Sigmoid colon (tissue), 7 donors: ENCODE measurements at regions of chr5 and their contacts with region 1.

Region 1: DNA sequence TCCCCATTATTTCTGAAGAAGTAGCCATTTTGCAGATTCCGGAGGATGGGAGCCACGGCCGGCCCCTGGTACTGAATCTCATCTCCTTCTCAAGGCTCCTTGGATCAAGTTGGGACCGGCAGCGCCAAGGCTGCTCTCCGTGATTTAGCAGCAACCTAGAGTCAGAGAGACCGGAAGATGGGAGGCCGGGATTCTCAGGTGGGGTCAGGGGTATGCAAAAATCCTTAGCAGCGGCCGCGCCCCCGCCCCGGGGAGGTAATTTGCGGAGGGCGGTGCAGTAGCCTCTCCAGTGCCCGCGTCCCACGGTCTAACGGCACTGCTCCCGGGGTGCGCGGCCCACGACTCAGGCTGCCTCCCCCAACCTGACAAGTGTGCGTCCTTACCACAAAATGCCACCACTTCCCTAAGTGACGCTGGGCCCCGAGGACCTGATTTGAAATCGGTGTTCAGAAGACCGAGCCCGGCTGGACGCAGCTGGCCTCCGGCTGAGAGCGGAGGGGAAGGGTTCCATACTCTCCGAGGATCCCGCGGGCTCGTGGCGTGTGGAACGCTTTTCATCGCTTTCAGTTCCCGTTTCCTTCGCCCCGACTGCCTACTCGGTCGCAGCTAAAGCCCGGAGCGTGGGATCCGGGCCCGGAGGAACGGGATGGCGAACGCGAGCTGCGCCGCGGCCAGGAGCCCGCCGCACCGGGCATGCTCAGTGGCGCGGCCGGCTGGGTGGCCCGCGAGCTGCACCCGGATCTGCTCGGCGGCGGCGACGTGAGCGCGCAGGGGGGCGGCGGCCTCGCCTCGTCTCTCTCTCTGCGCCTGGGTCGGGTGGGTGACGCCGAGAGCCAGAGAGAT is at the start of gene SCAMP1:
- DNase-seq: peak; percentile 95
- H3K4me3 ChIP-seq: peak within 1 kb of the TSS; percentile 83 to 97 (median 88)
- H3K27ac ChIP-seq: peak within 1 kb of the TSS; percentile 87 to 95 (median 92)
- H3K4me1 ChIP-seq: peaks cover 3 to 26% (median 12%) of the 10 kb centered on the region in 4 donors
- H3K27me3 ChIP-seq: no peaks in the 10 kb centered on the region
- CTCF ChIP-seq: peak in 2 of 4 experiments; percentile 12 to 52
- EP300 ChIP-seq: peak in 1 of 4 donors; percentile 24
- POLR2A ChIP-seq: no peak
- total RNA-seq, gene SCAMP1: 31.0 to 45.3 (median 37.7) TPM

Region 2: GRCh38 chr5:77499441-77499840 is 860.6 kb before region 1 on chr5:
- intact Hi-C with region 1: no loop called
- DNase-seq: no peak
- H3K4me3 ChIP-seq: no peak overlapping the region
- H3K27ac ChIP-seq: no peak overlapping the region
- H3K4me1 ChIP-seq: no peaks in the 10 kb centered on the region
- H3K27me3 ChIP-seq: no peaks in the 10 kb centered on the region
- CTCF ChIP-seq: no peak
- EP300 ChIP-seq: no peak
- POLR2A ChIP-seq: no peak

Region 3: DNA sequence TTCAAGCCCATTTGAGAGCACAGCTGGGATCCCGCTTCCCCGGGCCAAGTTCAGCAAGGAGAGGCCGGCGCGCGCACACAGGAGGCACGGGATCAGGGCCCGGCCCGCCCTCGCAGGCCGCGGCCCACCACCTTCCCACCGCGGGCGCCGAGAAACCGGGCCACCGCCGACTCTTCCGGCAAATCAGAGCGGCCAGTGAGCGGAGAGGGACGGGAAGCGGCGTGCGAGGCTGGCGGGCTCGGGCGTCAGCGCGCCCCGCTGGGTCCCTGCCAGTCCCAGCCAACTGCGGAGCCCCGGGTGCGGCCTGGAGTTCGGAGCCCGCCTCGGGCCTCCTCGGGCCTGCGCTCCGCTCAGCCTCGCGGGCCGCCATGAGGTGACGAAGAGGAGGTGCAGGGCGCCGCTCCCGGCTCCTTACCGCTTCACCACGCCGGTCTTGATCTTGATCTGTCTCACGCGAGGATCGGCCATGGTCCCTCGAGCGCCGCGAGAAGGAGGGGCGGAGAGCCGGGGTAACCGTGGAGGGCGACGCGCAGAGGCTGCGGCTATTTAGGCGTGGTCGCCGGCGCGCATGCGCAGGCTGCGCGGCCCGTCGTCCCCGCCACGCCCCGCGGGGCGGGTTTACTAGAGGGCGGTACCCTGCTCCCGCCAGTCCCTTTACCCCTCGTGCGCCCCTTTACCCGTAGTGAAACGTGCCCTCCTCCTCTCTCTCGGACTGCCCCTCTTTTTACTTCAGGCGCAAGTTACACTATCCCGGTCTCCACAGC is 584.1 kb before region 1 on chr5 and contains the start of gene TBCA:
- intact Hi-C with region 1: loop called (anchors 5 kb)
- DNase-seq: peak; percentile 93
- H3K4me3 ChIP-seq: peak within 1 kb of the TSS; percentile 56 to 75 (median 71)
- H3K27ac ChIP-seq: peak within 1 kb of the TSS; percentile 94 to 98 (median 96)
- H3K4me1 ChIP-seq: peaks cover 0 to 49% (median 38%) of the 10 kb centered on the region in 4 donors
- H3K27me3 ChIP-seq: no peaks in the 10 kb centered on the region
- CTCF ChIP-seq: peak in 2 of 4 experiments; percentile 20 to 26
- EP300 ChIP-seq: no peak
- POLR2A ChIP-seq: peak; percentile 77 to 80
- total RNA-seq, gene TBCA: 192 to 231 (median 214) TPM

Region 4: GRCh38 chr5:78345485-78345884 is 14.6 kb before region 1 on chr5:
- intact Hi-C with region 1: no loop called
- DNase-seq: no peak
- H3K4me3 ChIP-seq: no peak overlapping the region
- H3K27ac ChIP-seq: no peak overlapping the region
- H3K4me1 ChIP-seq: no peaks in the 10 kb centered on the region
- H3K27me3 ChIP-seq: no peaks in the 10 kb centered on the region
- CTCF ChIP-seq: no peak
- EP300 ChIP-seq: no peak
- POLR2A ChIP-seq: no peak

Region 5: DNA sequence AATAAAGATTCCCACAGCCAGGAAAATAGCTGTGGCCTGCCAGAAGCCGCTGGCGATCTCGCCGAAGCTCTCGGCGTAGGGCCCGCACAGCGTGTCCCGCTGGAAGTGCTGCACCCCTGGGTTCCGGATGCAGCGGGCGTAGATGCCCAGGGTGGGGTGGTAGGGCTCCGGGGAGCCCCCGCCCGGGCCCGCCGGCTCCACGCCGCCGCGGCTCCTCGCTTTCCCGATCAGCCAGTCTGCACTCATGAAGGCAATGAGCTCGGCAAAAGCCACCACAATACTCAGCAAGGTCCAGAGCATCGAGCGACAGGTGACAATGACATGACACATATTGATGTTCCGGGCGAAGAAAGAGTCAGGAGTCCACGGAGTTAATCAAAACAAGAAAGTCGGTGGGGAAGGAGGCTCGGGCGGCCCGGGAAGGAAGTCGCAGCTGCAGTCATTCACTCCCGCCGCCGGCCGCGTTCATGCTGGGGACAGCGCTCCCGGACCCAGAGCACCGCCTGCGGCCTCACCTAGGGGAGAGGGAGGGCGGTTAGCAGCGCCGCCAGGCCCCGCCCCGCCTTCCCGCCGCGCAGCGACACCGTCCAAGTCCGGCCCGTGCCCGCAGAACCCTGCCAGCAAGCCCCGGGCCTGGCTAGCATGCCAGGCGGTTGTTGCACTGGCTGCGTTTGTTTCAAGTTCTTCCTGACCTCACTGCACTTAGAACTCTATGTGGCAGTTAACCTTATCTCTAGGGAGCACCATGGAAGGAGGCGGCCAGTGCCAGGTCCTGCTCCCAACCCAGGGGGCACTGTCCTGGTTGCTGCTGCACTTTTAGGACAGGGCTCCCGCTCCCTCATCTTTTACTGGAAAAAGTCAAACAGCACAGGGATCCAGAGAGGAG is 150.1 kb after region 1 on chr5:
- intact Hi-C with region 1: loop called (anchors 10 kb)
- DNase-seq: peak; percentile 88
- H3K4me3 ChIP-seq: peak overlapping the region; percentile 22 to 51 (median 46)
- H3K27ac ChIP-seq: peak overlapping the region; percentile 78 to 84 (median 82)
- H3K4me1 ChIP-seq: peaks cover 0 to 69% (median 59%) of the 10 kb centered on the region in 4 donors
- H3K27me3 ChIP-seq: no peaks in the 10 kb centered on the region
- CTCF ChIP-seq: peak in 1 of 4 experiments; percentile 5
- EP300 ChIP-seq: no peak
- POLR2A ChIP-seq: peak in 1 of 2 donors; percentile 12